ENCODE measurements at regions of chr2 and their contacts with region 1.

Region 1: GRCh38 chr2:85813982-85814801 is 60.4 kb downstream of the ATOH8 start:
- DNase-seq: peak; percentile 96
- ATAC-seq: peak; percentile 96

Region 2: DNA sequence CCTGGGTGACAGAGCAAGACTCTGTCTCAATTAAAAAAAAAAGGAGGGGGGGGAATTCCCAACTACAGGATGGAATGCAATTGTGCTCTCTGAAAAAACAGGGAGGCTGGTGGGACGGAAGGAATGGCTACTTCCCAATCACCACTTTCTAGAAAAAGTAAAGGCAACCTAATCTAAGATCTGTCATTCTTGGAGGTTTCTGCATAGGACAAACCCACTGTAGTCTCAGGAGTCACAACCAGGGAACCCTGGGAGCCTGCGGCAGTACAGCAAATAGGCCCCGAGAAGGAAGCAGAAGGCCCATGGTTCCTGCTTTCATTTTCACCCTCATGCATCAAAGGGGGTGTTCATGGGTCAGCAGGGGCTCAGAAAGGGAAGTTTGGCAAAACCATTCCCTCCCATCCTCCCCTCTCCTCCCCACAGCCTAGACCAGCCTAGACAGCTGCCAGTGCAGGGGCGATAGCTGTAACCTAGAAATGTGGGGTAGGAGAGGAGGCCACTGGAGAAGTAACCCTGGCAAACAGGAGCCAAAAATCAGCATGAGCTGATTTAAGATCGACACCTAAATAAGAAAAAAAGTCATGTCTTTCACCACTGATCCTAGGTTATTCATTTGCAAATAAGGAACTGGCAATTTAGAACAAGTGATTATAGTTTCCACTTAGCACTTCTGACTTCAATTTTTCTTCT is 981.3 kb before region 1 on chr2:
- intact Hi-C with region 1: no loop called
- DNase-seq: no peak
- ATAC-seq: peak; percentile 85

Region 3: DNA sequence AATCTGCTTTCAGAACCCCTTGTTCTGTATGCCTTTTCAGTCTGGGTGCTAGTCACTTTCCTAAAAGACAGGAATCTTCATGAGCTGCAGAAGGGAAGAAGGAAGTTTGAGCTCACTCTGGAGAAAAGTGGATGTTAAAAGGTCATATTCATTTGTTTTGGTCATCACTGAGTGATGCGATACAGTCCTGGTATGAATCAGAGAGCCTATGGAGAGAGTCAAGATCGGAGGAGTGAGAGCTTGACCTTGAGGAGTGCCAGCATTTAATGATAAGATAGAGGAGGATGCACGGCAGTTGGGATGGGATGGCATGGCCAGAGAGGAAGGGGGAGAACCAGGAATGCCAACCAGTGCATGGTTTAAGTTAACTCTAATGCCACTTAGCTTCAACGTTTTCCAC is 178.6 kb before region 1 on chr2:
- intact Hi-C with region 1: loop called (anchors 10 kb)
- DNase-seq: peak; percentile 10
- ATAC-seq: no peak

Region 4: DNA sequence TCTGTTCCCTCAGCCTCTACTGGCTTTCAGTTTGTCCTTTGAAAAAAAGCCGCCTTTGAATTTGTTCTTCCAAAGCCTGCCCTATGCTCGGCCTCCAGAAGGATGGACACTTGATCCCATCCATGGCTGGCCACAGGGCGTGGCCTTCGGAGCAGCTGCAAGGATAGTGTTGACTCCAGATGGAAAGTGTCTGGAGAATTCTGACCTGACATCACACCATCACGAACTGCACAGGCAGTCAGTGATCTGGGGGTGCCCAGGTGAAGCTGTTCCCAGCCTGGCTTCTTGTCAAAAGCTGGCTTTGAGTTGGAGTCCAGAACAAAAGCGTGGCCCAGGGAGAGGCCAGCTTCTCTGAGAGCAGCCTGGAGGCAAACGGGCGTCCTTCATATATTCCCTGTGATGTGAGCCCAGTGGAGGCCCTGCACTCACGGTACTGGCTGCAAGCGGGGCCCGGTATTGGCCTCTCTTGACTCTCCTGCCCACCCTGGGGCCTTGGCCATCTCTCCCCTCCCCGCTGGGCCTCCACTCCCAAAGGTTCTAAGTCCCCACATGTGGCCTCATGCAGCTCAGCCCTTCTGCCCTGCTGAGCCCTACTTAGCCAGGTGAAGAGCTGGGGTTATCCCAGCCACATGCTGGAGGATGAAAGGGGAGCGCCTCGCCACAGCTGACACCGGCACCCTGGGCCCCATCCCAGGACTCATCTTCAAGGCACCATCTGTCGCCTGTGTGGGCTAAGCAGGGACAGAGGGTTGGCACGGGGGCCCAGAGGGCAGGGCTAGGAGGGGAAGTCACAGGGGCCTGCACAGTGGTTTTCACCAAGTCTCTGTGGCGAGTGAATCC is 80.9 kb before region 1 on chr2:
- intact Hi-C with region 1: loop called (anchors 5 kb)
- DNase-seq: no peak
- ATAC-seq: peak; percentile 74

Region 5: DNA sequence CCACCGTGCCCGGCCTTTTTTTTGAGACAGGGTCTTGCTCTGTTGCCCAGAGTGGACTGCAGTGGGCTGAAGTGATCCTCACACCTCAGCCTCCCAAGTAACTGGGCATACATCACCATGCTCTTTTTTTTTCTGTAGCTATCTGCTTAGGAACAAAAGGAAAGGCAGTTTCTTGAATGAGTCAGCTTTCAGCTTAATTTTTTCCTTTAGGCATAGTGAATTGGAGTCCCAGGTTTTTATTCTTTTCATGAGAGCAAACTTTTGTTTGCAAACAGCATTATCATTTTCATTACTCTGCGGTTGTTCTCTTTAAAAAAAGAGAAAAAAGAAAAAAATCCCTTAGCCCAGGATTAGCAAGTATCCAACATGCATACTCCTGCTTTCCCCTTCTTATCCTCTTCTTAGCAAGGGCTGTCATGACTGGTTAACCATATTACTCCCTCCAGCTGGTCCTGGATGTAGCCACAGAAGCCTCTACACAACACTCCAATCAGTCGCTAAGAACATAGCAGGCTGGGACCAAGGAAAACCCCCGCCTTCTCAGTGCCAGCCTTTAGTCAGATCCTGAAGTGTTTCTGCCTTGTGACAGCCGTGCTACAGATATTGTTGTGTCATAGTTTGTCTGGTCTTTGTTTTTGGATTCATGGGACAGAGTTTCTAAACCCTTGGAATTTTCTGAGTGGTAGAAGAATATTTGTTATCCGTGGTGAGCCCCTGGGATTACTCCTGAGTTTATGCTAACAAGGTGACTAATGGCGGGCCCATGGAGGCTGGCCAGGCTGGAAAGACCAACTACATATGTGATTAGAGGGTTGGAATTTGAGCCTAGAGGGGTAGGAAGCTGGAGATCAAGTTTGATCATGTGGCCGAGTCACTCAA is 97.9 kb after region 1 on chr2:
- intact Hi-C with region 1: no loop called
- DNase-seq: no peak
- ATAC-seq: peak; percentile 4